ENCODE measurements at regions of chr12 and their contacts with region 1.

Region 1: GRCh38 chr12:119681961-119682638 is 14.2 kb downstream of the PRKAB1 start:
- DNase-seq: peak; percentile 63
- CTCF ChIP-seq: no peak

Region 2: GRCh38 chr12:119667577-119668323 is 14.3 kb before region 1 on chr12 and contains the start of gene PRKAB1:
- CTCF ChIA-PET with region 1: interaction called, 37 read pairs
- POLR2A ChIA-PET with region 1: no interaction called
- DNase-seq: peak; percentile 98
- CTCF ChIP-seq: peak; percentile 96

Region 3: DNA sequence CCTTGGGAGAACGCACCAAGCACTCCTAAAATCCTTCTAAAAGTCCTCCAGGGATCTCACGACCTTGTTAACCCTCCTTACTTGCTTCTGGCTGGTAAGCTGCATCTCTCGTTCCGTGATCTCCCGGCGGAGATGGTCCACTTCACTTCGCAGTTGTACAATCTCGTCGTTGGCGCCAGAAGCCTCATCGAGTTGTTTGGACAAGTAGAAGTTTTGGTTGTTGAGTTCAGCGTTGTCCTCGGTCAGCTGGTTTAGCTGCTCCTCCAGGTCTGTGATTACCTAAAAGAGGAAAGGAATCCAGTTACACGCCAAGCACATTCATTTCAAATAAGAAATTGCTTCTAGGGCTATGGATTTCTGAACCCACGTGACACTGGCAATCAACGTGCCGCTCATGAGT is 53.0 kb after region 1 on chr12:
- CTCF ChIA-PET with region 1: no interaction called
- POLR2A ChIA-PET with region 1: no interaction called
- DNase-seq: no peak
- CTCF ChIP-seq: no peak

Measured in GM10248 (cell line).